ENCODE measurements at regions of chr10 and their contacts with region 1.

Region 1: DNA sequence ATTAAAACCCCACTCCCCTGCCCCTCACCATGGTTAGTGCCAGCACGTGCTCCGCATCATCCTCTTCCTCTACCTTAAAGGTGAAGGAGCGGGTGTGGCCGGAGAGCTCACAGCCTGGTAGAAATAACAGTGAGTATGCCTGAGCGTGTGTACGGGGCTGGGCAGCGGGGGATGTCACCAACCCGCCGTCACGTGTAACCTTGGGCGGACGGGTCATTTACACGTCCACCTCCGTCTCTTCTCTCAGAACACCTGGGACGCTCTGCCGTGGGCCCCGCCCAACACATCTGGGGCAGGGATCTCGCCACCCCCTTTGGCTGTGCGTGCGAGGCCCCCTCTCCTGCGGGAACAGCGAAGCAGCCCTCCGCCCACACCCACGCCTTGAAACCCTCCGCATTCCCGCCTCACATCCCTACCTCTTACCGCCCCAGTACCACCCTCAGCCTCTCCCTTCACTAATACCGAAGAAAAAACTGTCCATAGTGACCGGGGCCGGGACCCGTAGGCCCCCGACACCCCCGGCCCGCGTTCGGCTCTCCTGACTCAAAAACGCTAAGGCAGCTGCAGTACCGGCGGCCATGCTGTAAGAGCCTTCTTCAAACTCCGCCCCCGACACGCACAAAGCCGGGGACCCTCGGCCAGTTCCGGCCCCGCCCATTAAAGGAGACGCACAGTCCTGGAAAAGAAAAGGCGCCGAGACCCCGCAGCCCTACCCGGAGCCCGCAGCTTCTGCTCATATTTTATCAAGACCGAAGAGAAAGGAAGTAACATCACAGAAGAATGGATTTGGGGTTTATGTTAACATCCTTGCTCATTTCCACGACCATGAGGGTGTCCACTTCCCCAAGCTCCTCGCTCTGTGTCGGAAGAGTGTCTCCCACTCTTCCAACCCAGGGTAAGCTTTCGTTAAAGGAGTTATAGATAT is at the start of gene NPM3:
- DNase-seq: peak; percentile 85
- H3K4me3 Mint-ChIP-seq: peak within 1 kb of the TSS; percentile 100
- H3K27ac Mint-ChIP-seq: peak within 1 kb of the TSS; percentile 80
- H3K4me1 Mint-ChIP-seq: peaks cover 66% of the 10 kb centered on the region
- H3K27me3 Mint-ChIP-seq: peaks cover 7% of the 10 kb centered on the region
- total RNA-seq, gene NPM3: 26.6 to 26.7 TPM

Region 2: GRCh38 chr10:101602761-101603398 is 180.2 kb before region 1 on chr10:
- CTCF ChIA-PET with region 1: interaction called, 140 read pairs
- POLR2A ChIA-PET with region 1: interaction called, 8 read pairs
- DNase-seq: peak; percentile 81
- H3K4me3 Mint-ChIP-seq: no peak overlapping the region
- H3K27ac Mint-ChIP-seq: no peak overlapping the region
- H3K4me1 Mint-ChIP-seq: no peaks in the 10 kb centered on the region
- H3K27me3 Mint-ChIP-seq: no peaks in the 10 kb centered on the region

Region 3: GRCh38 chr10:101609481-101609880 is 173.6 kb before region 1 on chr10:
- CTCF ChIA-PET with region 1: interaction called, 140 read pairs
- POLR2A ChIA-PET with region 1: no interaction called
- DNase-seq: no peak
- H3K4me3 Mint-ChIP-seq: no peak overlapping the region
- H3K27ac Mint-ChIP-seq: no peak overlapping the region
- H3K4me1 Mint-ChIP-seq: peaks cover 9% of the 10 kb centered on the region
- H3K27me3 Mint-ChIP-seq: no peaks in the 10 kb centered on the region

Region 4: DNA sequence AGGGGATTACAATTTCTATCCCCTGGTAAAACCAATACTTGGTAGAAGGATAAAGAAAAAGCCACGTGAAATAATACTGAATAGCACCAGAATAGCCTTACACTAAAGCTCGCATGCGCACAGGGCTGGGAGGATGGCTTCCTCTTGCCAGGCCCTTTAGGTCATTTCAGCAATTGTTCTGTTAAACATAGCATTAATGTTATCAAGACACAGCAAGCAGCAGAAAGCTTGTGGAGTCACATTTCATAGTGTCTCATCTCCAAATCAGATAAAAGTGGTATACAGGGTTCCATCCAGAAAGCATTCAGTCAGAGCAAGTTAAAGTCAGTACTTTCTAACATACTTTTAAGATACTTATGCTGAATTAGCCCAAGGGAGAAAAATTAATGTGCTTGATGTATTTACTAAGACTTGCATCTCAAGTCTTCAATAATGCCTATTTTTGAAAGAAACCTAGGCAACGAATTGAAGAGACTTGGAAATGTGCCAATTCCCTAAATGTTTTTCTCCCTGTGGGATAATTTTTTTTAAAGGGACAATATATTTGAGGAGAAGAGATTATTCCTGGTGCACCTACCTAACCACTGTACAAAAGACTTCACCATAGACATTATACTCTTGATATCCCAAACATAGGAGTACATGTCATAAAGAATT is 14.5 kb after region 1 on chr10:
- CTCF ChIA-PET with region 1: interaction called, 13 read pairs
- POLR2A ChIA-PET with region 1: interaction called, 16 read pairs
- DNase-seq: no peak
- H3K4me3 Mint-ChIP-seq: no peak overlapping the region
- H3K27ac Mint-ChIP-seq: no peak overlapping the region
- H3K4me1 Mint-ChIP-seq: peaks cover 9% of the 10 kb centered on the region
- H3K27me3 Mint-ChIP-seq: no peaks in the 10 kb centered on the region